Activated naive CD4-positive, alpha-beta T cell treated with anti-CD3 and anti-CD28 coated beads for 36 hours (primary cell): ENCODE measurements at regions of chr21 and their contacts with region 1.

Region 1: DNA sequence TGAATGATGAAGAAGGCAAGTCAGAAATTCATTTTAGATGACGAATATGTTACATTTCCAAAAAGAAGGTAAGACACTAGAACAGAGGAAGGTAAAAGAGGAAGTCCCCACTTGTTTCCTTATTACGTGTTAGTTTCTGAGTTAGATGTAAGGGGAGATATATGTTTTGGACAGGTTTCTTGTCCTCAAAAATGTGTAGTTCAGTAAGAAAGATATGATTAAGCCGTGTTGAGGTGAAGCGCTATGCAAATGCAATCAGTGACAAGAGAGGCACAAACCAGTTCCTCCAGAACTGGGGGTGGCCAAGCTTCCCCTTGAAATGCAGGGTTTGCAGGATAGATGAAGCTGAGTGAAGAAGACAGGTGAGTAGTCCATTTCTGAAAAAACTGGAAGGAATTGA is 293.3 kb upstream of the RUNX1 start:
- DNase-seq: peak; percentile 68
- H3K4me3 Mint-ChIP-seq: peak overlapping the region; percentile 39
- H3K27ac Mint-ChIP-seq: peak overlapping the region; percentile 93
- H3K4me1 Mint-ChIP-seq: peaks cover 42% of the 10 kb centered on the region
- H3K27me3 Mint-ChIP-seq: peaks cover 4% of the 10 kb centered on the region

Region 2: GRCh38 chr21:35026617-35027562 is 315.6 kb before region 1 on chr21:
- CTCF ChIA-PET with region 1: no interaction called
- intact Hi-C with region 1: loop called (anchors 2 kb)
- DNase-seq: peak; percentile 88
- H3K4me3 Mint-ChIP-seq: peak overlapping the region; percentile 83
- H3K27ac Mint-ChIP-seq: peak overlapping the region; percentile 95
- H3K4me1 Mint-ChIP-seq: peaks cover 86% of the 10 kb centered on the region
- H3K27me3 Mint-ChIP-seq: no peaks in the 10 kb centered on the region

Region 3: GRCh38 chr21:35138665-35139381 is 203.6 kb before region 1 on chr21:
- CTCF ChIA-PET with region 1: no interaction called
- intact Hi-C with region 1: loop called (anchors 1 kb)
- DNase-seq: peak; percentile 87
- H3K4me3 Mint-ChIP-seq: peak overlapping the region; percentile 70
- H3K27ac Mint-ChIP-seq: peak overlapping the region; percentile 95
- H3K4me1 Mint-ChIP-seq: peaks cover 38% of the 10 kb centered on the region
- H3K27me3 Mint-ChIP-seq: no peaks in the 10 kb centered on the region

Region 4: GRCh38 chr21:35252831-35253230 is 89.6 kb before region 1 on chr21:
- CTCF ChIA-PET with region 1: no interaction called
- intact Hi-C with region 1: loop called (anchors 2 kb)
- DNase-seq: peak; percentile 63
- H3K4me3 Mint-ChIP-seq: no peak overlapping the region
- H3K27ac Mint-ChIP-seq: no peak overlapping the region
- H3K4me1 Mint-ChIP-seq: peaks cover 29% of the 10 kb centered on the region
- H3K27me3 Mint-ChIP-seq: no peaks in the 10 kb centered on the region

Region 5: DNA sequence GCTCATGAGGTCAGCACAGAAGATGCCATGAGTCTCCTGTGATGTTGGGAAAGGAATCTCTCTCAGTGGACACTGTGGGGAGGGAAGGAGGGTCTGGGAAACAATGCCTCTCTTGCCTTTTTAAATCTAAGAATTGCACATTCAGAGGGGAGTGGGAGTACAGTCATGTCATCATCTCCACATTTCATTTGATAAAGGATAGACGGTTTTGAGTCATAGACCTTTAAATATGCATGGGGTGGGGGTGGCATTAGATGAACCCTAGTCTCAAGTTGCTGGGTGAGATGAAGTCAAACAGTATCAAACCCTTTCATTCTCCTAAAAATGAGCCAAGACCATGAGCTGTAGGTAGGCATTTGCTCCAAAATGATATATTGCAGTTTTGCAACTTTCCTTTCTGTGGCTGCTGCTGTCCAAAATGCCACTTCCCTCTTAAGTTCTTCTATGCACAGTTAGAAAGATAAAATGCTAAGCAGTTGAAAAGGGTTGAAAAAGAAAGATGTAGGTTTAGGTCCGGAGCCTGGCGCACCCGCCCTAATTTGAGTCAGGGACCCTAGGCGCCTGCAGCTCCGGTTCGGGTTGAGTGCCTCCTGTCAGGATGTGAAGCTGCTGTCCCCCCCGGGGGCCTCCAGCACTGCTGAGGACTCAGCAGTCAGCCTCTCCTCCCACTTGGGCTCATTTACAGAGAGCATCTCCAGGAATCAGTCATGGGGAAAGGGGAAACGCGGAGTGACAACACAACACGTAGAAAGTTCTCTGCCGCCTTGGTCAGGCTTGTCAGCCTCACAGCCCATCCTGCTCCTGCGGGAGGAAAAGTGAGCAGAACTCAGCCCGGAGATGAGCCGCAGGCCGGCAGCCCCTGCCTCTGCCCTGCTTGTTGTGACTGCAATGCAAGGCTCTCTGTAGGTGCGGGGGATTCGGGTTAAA is 185.9 kb after region 1 on chr21:
- CTCF ChIA-PET with region 1: no interaction called
- intact Hi-C with region 1: loop called (anchors 5 kb)
- DNase-seq: peak; percentile 80
- H3K4me3 Mint-ChIP-seq: peak overlapping the region; percentile 82
- H3K27ac Mint-ChIP-seq: peak overlapping the region; percentile 87
- H3K4me1 Mint-ChIP-seq: peaks cover 46% of the 10 kb centered on the region
- H3K27me3 Mint-ChIP-seq: no peaks in the 10 kb centered on the region